Calu3 (cell line): ENCODE measurements at regions of chr12 and their contacts with region 1.

Region 1: GRCh38 chr12:74963867-74964331 is 245.7 kb downstream of the KCNC2 start:
- DNase-seq: no peak
- H3K4me3 Mint-ChIP-seq: peak overlapping the region; percentile 13
- H3K27ac Mint-ChIP-seq: peak overlapping the region; percentile 91
- H3K4me1 Mint-ChIP-seq: peaks cover 20% of the 10 kb centered on the region
- H3K27me3 Mint-ChIP-seq: no peaks in the 10 kb centered on the region
- CTCF ChIP-seq: no peak

Region 2: GRCh38 chr12:74656251-74656650 is 307.6 kb before region 1 on chr12:
- CTCF ChIA-PET with region 1: no interaction called
- intact Hi-C with region 1: no loop called
- DNase-seq: no peak
- H3K4me3 Mint-ChIP-seq: no peak overlapping the region
- H3K27ac Mint-ChIP-seq: no peak overlapping the region
- H3K4me1 Mint-ChIP-seq: no peaks in the 10 kb centered on the region
- H3K27me3 Mint-ChIP-seq: no peaks in the 10 kb centered on the region
- CTCF ChIP-seq: no peak

Region 3: GRCh38 chr12:74890237-74890599 is 73.7 kb before region 1 on chr12:
- CTCF ChIA-PET with region 1: no interaction called
- intact Hi-C with region 1: loop called (anchors 1 kb)
- DNase-seq: peak; percentile 52
- H3K4me3 Mint-ChIP-seq: peak overlapping the region; percentile 33
- H3K27ac Mint-ChIP-seq: peak overlapping the region; percentile 68
- H3K4me1 Mint-ChIP-seq: peaks cover 36% of the 10 kb centered on the region
- H3K27me3 Mint-ChIP-seq: no peaks in the 10 kb centered on the region
- CTCF ChIP-seq: no peak

Region 4: DNA sequence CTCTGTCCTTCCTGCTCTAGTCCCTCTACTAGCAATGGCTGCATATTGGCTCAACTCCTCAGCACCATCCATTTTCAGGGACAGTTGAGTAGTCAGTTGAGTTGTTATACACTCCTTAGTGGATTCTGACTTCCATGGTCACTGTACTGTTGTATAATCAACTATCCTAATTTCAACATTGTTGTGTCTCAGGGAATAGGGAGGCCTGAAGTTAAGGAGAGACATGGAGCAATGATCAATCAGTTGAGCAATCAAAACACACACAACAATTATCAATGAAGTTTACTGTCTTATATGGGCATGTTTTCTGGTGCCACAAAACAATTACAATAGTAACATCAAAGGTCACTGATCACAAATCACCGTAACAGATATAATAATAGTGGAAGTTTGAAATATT is 10.2 kb before region 1 on chr12:
- CTCF ChIA-PET with region 1: no interaction called
- intact Hi-C with region 1: no loop called
- DNase-seq: no peak
- H3K4me3 Mint-ChIP-seq: no peak overlapping the region
- H3K27ac Mint-ChIP-seq: no peak overlapping the region
- H3K4me1 Mint-ChIP-seq: peaks cover 2% of the 10 kb centered on the region
- H3K27me3 Mint-ChIP-seq: no peaks in the 10 kb centered on the region
- CTCF ChIP-seq: no peak

Region 5: GRCh38 chr12:75154388-75154787 is 190.5 kb after region 1 on chr12:
- CTCF ChIA-PET with region 1: no interaction called
- intact Hi-C with region 1: no loop called
- DNase-seq: no peak
- H3K4me3 Mint-ChIP-seq: no peak overlapping the region
- H3K27ac Mint-ChIP-seq: no peak overlapping the region
- H3K4me1 Mint-ChIP-seq: no peaks in the 10 kb centered on the region
- H3K27me3 Mint-ChIP-seq: no peaks in the 10 kb centered on the region
- CTCF ChIP-seq: no peak